Esophagus squamous epithelium (tissue), 5 donors: ENCODE measurements at regions of chr1 and their contacts with region 1.

Region 1: DNA sequence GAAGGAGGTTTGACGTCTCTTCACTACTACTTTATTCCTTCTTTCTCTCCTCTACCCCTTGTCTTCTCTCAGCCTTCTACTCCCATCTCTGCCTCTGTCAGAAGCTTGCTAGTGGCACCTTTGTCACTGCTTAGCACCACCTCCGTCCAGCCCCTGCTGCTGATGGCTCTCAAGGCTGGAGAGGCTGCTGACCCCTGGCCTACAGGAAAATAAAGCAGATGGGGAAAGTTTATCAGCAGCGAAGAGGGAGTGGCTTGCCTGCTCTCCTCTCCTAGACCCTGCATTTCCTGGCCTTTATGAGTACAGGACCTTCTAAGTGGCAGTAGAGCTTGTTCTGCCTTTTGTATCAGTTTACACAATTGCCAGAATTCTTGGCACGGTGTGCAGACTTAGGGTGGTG is 27.0 kb downstream of the PROX1 start:
- DNase-seq: no peak
- H3K4me3 ChIP-seq: no peak overlapping the region
- H3K27ac ChIP-seq: no peak overlapping the region
- H3K4me1 ChIP-seq: no peaks in the 10 kb centered on the region
- H3K27me3 ChIP-seq: no peaks in the 10 kb centered on the region
- CTCF ChIP-seq: no peak
- POLR2A ChIP-seq: no peak

Region 2: GRCh38 chr1:214044438-214045214 is 29.9 kb after region 1 on chr1:
- intact Hi-C with region 1: loop called (anchors 2 kb)
- DNase-seq: no peak
- H3K4me3 ChIP-seq: no peak overlapping the region
- H3K27ac ChIP-seq: no peak overlapping the region
- H3K4me1 ChIP-seq: no peaks in the 10 kb centered on the region
- H3K27me3 ChIP-seq: no peaks in the 10 kb centered on the region
- CTCF ChIP-seq: no peak
- POLR2A ChIP-seq: no peak

Region 3: DNA sequence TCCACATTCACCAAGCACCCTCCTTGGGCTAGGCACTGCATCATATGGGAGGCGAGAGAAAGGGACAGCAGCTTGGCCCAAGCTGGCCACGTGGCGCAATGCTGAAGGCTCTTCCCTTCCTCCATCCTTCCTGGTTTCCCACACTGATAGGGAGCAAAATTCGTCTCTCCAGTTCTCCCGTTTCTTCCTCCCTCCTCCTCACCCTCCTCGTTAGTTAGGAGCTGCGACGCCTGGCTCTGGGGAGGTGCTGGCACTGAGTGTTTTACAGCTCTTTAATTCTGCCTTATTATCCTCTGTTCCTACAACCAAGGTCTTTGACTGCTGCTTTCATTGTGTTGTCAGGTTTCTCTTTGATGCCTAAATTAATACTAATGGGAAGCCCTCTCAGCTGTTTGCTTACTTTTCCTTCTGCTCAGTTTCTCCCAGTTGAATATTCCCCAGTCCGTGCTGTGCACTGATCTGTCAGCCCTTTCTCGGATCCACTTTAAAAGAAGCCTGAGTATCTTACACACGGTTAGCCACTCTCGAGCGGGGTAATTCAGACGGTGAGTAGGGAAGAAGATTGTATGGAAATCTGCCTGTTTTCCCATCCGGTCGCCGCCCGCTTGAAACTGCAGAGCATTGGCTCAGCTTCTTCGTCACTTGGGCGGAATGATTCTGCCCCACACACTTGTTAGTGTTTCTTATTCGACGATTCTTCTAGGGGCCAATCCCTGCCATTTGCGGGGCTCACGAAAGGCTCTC is 210.1 kb after region 1 on chr1:
- intact Hi-C with region 1: no loop called
- DNase-seq: no peak
- H3K4me3 ChIP-seq: peak overlapping the region; percentile 7 to 55 (median 32)
- H3K27ac ChIP-seq: no peak overlapping the region
- H3K4me1 ChIP-seq: peaks cover 0 to 13% (median 3%) of the 10 kb centered on the region in 3 donors
- H3K27me3 ChIP-seq: peaks cover 0 to 9% (median 0%) of the 10 kb centered on the region in 4 donors
- CTCF ChIP-seq: no peak
- POLR2A ChIP-seq: no peak

Region 4: DNA sequence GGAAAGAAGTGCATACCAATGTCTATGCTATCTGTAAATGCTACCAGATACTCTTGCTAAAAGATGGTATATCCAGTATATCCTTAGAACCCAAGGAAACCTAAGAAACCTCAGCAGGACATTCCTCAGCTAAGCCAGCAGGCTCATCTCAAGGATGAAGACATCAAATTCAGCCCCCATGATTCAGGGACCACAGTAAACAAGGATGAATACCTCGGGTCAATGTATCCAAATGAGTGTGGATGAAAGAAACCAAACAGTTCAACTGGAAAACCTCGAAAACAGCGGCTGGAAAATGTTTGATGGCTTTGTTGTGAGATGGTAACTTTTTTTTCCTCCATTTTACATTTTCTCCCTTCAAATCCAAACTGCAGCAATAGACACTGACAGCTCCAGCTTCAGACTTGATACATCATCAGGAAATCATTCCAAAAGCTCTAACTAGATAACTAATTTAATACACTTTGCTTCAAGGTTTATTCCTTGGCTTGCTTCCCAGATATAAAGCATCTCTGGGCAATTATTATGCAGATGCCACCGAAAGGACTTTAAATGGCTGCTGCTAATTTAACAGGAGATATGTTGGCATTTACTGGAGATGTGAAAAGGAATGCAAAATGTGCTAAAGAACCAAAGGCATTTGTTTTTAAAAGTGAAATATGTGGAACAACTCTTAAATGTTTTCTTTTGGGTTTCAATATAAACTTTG is 339.9 kb after region 1 on chr1:
- intact Hi-C with region 1: no loop called
- DNase-seq: no peak
- H3K4me3 ChIP-seq: no peak overlapping the region
- H3K27ac ChIP-seq: no peak overlapping the region
- H3K4me1 ChIP-seq: no peaks in the 10 kb centered on the region
- H3K27me3 ChIP-seq: no peaks in the 10 kb centered on the region
- CTCF ChIP-seq: no peak
- POLR2A ChIP-seq: no peak